ENCODE measurements at regions of chr2 and their contacts with region 1.

Region 1: GRCh38 chr2:205766779-205767359 is 84.6 kb downstream of the NRP2 start:
- H3K4me3 Mint-ChIP-seq: no peak overlapping the region
- H3K27ac Mint-ChIP-seq: no peak overlapping the region
- H3K4me1 Mint-ChIP-seq: peaks cover 12% of the 10 kb centered on the region
- H3K27me3 Mint-ChIP-seq: peaks cover 38% of the 10 kb centered on the region

Region 2: GRCh38 chr2:205808486-205809121 is 41.7 kb after region 1 on chr2:
- intact Hi-C with region 1: no loop called
- H3K4me3 Mint-ChIP-seq: no peak overlapping the region
- H3K27ac Mint-ChIP-seq: no peak overlapping the region
- H3K4me1 Mint-ChIP-seq: no peaks in the 10 kb centered on the region
- H3K27me3 Mint-ChIP-seq: peaks cover 6% of the 10 kb centered on the region

Region 3: GRCh38 chr2:205868773-205869333 is 102.0 kb after region 1 on chr2:
- intact Hi-C with region 1: no loop called
- H3K4me3 Mint-ChIP-seq: no peak overlapping the region
- H3K27ac Mint-ChIP-seq: no peak overlapping the region
- H3K4me1 Mint-ChIP-seq: peaks cover 12% of the 10 kb centered on the region
- H3K27me3 Mint-ChIP-seq: peaks cover 6% of the 10 kb centered on the region

Region 4: DNA sequence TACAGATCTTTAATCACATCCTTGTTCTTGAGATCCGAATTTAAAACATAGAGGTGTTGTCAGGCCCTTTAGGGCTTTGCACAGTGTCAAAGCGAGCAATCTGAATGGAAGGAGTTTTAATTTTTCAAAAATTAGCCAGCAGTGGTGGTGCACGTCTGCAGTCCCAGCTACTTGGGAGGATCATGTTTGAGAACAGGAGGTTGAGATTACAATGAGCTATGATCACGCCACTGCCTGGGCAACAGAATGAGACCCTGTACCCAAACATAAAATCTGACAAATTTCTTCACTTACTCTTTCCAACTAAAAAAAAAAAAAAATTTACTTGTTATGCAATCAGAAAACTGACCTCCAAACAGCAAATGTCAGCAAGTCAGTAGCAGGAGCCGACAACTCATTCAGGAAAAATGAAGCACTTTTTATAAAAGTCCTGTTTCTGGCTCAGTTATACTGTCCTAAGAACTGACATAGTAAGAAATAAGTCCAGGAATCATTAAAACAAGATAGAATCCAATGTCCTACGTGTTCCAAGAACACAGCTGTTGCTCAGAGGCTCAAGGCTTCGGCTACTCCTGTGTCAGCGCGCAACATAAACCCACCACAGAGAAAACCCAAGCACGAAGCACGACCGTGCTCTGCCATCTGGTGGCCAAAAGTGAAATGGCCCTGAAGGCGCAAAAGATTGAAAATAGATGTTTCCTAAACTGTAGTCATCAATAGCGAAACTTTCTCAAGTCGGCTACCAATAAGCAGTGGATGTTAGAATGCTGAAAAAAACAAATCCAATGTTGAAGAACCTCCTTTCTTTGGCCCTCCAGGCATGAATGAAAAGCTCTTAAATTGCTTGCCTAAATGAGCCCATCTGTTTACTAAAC is 181.0 kb after region 1 on chr2:
- intact Hi-C with region 1: loop called (anchors 5 kb)
- H3K4me3 Mint-ChIP-seq: no peak overlapping the region
- H3K27ac Mint-ChIP-seq: no peak overlapping the region
- H3K4me1 Mint-ChIP-seq: peaks cover 22% of the 10 kb centered on the region
- H3K27me3 Mint-ChIP-seq: peaks cover 2% of the 10 kb centered on the region

Region 5: GRCh38 chr2:206378835-206379234 is 612.0 kb after region 1 on chr2:
- intact Hi-C with region 1: no loop called
- H3K4me3 Mint-ChIP-seq: no peak overlapping the region
- H3K27ac Mint-ChIP-seq: no peak overlapping the region
- H3K4me1 Mint-ChIP-seq: peaks cover 11% of the 10 kb centered on the region
- H3K27me3 Mint-ChIP-seq: no peaks in the 10 kb centered on the region

Measured in dendritic cell treated with granulocyte-macrophage colony-stimulating factor and Interleukin-4, amounts not matched to agents 40 ng/mL and 50 ng/mL, for 4 days (primary cell).